Activated CD4-positive, alpha-beta T cell treated with anti-CD3 and anti-CD28 coated beads for 36 hours (primary cell): ENCODE measurements at regions of chr1 and their contacts with region 1.

Region 1: GRCh38 chr1:26695356-26696118 is at the start of gene ARID1A:
- DNase-seq: peak; percentile 97
- ATAC-seq: peak; percentile 55
- H3K4me3 Mint-ChIP-seq: peak within 1 kb of the TSS; percentile 81
- H3K27ac Mint-ChIP-seq: peak within 1 kb of the TSS; percentile 91
- H3K4me1 Mint-ChIP-seq: peaks cover 30% of the 10 kb centered on the region
- H3K27me3 Mint-ChIP-seq: no peaks in the 10 kb centered on the region
- total RNA-seq, gene ARID1A: 73.1 to 112 TPM

Region 2: DNA sequence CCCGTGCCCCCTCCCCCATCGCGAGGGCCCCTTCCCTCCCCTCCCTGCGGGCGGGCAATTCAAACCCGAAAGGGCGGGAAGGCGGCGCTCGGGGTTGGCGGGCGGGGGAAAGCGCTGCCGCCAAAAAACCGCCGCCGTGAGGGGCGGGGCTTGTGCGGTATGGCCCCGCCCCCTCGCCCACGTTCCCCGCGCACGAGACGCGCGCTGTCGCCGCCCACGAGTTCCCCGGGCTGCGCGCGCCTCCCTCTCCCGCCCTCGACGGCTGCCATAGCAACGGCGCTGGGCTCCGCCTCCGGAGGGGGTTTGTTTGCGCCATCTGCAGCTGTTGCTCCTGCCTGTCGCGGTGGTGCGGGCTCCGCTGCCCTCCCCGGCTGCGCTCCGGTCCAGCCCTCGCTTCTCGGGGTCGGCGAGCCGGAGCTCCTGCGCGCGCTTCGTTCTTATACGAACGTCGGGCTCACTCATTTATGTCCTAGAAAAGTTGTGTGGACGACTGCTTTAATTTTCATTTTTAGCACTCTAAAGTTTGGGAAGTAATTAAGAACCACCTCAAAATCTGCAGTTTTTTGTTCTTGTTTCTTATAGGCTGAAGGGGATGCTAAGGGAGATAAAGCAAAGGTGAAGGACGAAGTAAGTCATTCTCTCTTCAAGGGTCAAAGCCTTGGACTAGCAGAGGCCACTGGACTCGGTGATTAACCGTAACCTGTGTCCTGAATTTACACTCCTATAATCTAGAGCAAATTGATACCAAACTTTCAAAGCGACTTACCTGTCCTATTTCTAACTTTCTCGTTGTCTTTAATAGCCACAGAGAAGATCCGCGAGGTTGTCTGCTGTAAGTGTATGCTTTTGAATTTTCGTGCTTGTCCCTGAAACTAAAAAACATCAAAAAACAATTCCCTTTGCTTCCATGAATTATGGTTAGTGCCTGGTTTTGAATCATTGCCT is 222.4 kb before region 1 on chr1:
- CTCF ChIA-PET with region 1: interaction called, 4 read pairs
- POLR2A ChIA-PET with region 1: no interaction called
- intact Hi-C with region 1: loop called in 1 of 2 experiments (anchors 2 kb)
- DNase-seq: peak; percentile 97
- ATAC-seq: peak; percentile 62
- H3K4me3 Mint-ChIP-seq: peak overlapping the region; percentile 91
- H3K27ac Mint-ChIP-seq: peak overlapping the region; percentile 43
- H3K4me1 Mint-ChIP-seq: peaks cover 50% of the 10 kb centered on the region
- H3K27me3 Mint-ChIP-seq: no peaks in the 10 kb centered on the region

Region 3: DNA sequence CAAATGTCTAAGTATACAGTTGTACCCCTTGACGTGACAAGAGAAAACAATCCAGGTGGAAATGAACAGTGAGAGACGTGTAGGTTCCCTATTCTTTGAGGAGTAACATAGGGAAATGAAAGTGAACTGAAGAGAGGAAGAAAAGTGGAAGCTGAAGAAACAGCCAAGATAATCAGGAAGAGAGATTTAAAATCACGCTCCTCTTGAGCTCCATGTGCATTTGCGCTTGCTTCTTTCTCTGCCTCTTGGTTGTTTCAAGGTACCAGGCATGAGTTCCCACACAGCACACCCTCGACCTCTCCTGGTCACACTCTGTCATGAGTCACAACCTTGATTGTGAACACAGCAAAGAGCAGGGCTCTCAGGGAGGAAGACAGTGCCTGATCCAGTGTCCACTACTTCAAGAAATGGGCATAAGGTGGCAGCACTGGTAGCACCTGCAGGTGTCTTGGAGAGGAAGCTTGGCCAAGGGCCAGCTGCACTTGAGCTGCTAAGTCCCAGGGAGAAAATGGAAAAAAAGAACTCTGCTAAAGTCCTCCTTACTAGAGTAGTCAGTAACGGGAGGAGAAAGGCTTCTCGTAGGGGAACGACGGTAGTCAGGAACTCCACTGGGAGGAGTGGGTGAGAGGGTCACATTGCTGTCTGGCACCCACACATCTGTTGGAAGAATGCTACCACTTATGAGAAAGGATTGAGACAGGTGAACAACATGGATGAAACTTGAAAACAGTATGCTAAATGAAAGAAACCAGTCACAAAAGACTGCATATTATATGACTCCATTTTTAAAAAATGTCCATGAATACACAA is 18.0 kb before region 1 on chr1:
- CTCF ChIA-PET with region 1: interaction called, 23 read pairs
- POLR2A ChIA-PET with region 1: interaction called, 3 read pairs
- intact Hi-C with region 1: loop called in 1 of 2 experiments (anchors 2 kb)
- DNase-seq: peak; percentile 74
- ATAC-seq: peak; percentile 100
- H3K4me3 Mint-ChIP-seq: peak overlapping the region; percentile 1
- H3K27ac Mint-ChIP-seq: peak overlapping the region; percentile 48
- H3K4me1 Mint-ChIP-seq: peaks cover 15% of the 10 kb centered on the region
- H3K27me3 Mint-ChIP-seq: no peaks in the 10 kb centered on the region

Region 4: GRCh38 chr1:26744075-26744959 is 48.8 kb after region 1 on chr1:
- CTCF ChIA-PET with region 1: interaction called, 12 read pairs
- POLR2A ChIA-PET with region 1: interaction called, 26 read pairs
- intact Hi-C with region 1: loop called (anchors 1 kb)
- DNase-seq: peak; percentile 90
- ATAC-seq: peak; percentile 93
- H3K4me3 Mint-ChIP-seq: peak overlapping the region; percentile 67
- H3K27ac Mint-ChIP-seq: peak overlapping the region; percentile 97
- H3K4me1 Mint-ChIP-seq: peaks cover 93% of the 10 kb centered on the region
- H3K27me3 Mint-ChIP-seq: no peaks in the 10 kb centered on the region

Region 5: GRCh38 chr1:26900001-26900814 is 204.7 kb after region 1 on chr1 and contains the start of gene GPATCH3:
- CTCF ChIA-PET with region 1: no interaction called
- POLR2A ChIA-PET with region 1: interaction called, 6 read pairs
- intact Hi-C with region 1: loop called in 1 of 2 experiments (anchors 1 kb)
- DNase-seq: peak; percentile 95
- ATAC-seq: peak; percentile 93
- H3K4me3 Mint-ChIP-seq: peak within 1 kb of the TSS; percentile 94
- H3K27ac Mint-ChIP-seq: peak within 1 kb of the TSS; percentile 100
- H3K4me1 Mint-ChIP-seq: peaks cover 17% of the 10 kb centered on the region
- H3K27me3 Mint-ChIP-seq: no peaks in the 10 kb centered on the region
- total RNA-seq, gene GPATCH3: 7.0 to 8.7 TPM

Region 6: GRCh38 chr1:28552758-28553663 is 1857.5 kb after region 1 on chr1 and contains the start of gene TRNAU1AP:
- CTCF ChIA-PET with region 1: no interaction called
- POLR2A ChIA-PET with region 1: no interaction called
- intact Hi-C with region 1: loop called in 1 of 2 experiments (anchors 10 kb)
- DNase-seq: peak; percentile 99
- ATAC-seq: peak; percentile 94
- H3K4me3 Mint-ChIP-seq: peak within 1 kb of the TSS; percentile 92
- H3K27ac Mint-ChIP-seq: peak within 1 kb of the TSS; percentile 95
- H3K4me1 Mint-ChIP-seq: peaks cover 24% of the 10 kb centered on the region
- H3K27me3 Mint-ChIP-seq: no peaks in the 10 kb centered on the region
- total RNA-seq, gene TRNAU1AP: 50.7 to 60.2 TPM